CD8-positive, alpha-beta T cell (primary cell): ENCODE measurements at regions of chr1 and their contacts with region 1.

Region 1: DNA sequence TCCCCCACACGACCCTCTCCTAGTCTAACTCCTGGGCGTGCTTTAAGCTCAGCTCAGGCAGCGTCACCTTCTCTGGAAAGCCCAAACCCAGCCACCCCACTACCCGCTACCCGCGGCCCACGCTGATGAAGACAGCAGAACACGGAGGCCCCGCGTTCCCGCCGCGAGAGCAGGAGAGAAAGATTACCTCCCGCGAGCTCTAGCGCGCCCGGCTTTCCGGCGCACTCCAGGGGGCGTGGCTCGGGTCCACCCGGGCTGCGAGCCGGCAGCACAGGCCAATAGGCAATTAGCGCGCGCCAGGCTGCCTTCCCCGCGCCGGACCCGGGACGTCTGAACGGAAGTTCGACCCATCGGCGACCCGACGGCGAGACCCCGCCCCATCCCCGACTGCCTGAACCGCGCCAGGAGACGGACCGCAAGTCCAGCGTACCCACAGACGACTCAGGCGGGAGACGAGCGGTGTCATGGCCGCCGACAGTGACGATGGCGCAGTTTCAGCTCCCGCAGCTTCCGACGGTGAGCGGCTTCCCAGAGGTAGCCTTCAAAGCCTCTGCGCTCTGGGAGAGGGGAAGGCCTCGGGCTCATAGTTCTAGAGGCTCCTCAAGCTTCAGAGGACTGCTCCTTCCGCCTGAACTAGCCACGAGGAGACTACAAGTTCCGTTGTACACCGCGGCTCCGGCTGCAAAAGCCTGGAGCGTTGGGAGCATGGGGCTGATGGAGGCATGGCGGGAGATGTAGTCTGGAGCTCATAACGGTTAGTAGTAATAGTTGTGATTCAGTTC is at the starts of genes MUTYH and TOE1:
- DNase-seq: peak; percentile 79 to 94 (median 89)
- ATAC-seq: peak; percentile 81
- H3K4me3 ChIP-seq: peak within 1 kb of the TSS; percentile 88 to 94
- H3K4me3 Mint-ChIP-seq: peak within 1 kb of the TSS; percentile 98
- H3K27ac ChIP-seq: peak within 1 kb of the TSS; percentile 97 to 99
- H3K27ac Mint-ChIP-seq: peak within 1 kb of the TSS; percentile 97
- H3K4me1 ChIP-seq: peaks cover 35% of the 10 kb centered on the region
- H3K4me1 Mint-ChIP-seq: peaks cover 50% of the 10 kb centered on the region
- H3K27me3 ChIP-seq: no peaks in the 10 kb centered on the region
- H3K27me3 Mint-ChIP-seq: no peaks in the 10 kb centered on the region
- CTCF ChIP-seq: no peak
- total RNA-seq, gene MUTYH: 53.0 to 62.5 TPM
- total RNA-seq, gene TOE1: 53.8 to 56.5 TPM

Region 2: GRCh38 chr1:44739361-44740178 is 600.4 kb before region 1 on chr1 and contains the start of gene KIF2C:
- CTCF ChIA-PET with region 1: no interaction called
- POLR2A ChIA-PET with region 1: no interaction called
- intact Hi-C with region 1: loop called in 1 of 2 experiments (anchors 1 kb)
- DNase-seq: peak; percentile 93 to 98 (median 96)
- ATAC-seq: peak; percentile 100
- H3K4me3 ChIP-seq: peak within 1 kb of the TSS; percentile 81 to 84
- H3K4me3 Mint-ChIP-seq: peak within 1 kb of the TSS; percentile 93
- H3K27ac ChIP-seq: peak within 1 kb of the TSS; percentile 69 to 88
- H3K27ac Mint-ChIP-seq: peak within 1 kb of the TSS; percentile 97
- H3K4me1 ChIP-seq: peaks cover 12% of the 10 kb centered on the region
- H3K4me1 Mint-ChIP-seq: peaks cover 17% of the 10 kb centered on the region
- H3K27me3 ChIP-seq: no peaks in the 10 kb centered on the region
- H3K27me3 Mint-ChIP-seq: no peaks in the 10 kb centered on the region
- CTCF ChIP-seq: no peak
- total RNA-seq, gene KIF2C: 0.58 to 0.81 TPM

Region 3: DNA sequence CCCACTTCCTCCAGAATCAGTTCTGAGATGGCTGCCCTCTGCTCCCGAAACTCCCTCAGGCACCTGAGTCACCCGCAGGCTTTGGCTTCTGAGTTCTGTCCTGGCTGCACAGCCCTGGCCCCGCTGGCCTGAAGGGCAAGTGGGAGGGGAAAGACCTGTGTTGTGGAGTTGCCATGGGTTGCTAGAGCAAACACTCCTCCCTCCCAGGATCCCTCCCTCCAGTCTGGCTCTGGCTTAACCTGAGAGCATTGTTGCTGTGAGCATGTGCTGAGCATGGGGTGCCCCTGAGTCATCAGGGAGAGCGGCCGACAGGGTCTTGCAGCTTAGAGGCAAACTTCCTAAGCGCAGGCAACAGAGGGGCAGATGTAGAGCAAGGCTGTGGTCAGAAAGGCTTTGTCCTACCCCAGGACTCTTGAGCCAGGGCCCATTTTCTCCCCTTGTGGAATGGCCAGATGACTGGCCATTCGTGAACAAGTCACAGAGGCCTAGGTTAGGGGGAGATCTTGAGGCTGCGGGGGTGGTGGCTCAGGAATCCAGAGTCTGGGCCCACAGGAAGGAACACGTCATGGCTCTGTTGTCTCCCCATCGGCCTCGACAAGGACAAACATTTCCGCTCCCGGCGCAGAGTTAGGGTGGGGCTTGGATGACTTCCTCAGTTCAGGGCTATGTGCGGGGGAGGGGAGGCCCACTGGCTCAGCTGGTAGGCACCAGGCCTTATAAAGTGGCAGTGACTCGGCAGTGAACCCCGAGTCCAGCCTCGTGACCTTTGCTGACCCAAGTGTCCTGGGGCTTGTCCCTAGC is 532.5 kb before region 1 on chr1 and contains the start of gene DYNLT4:
- CTCF ChIA-PET with region 1: no interaction called
- POLR2A ChIA-PET with region 1: interaction called, 10 read pairs
- intact Hi-C with region 1: no loop called
- DNase-seq: peak; percentile 83 to 98 (median 93)
- ATAC-seq: peak; percentile 58
- H3K4me3 ChIP-seq: peak within 1 kb of the TSS in 1 of 2 experiments; percentile 35
- H3K4me3 Mint-ChIP-seq: peak within 1 kb of the TSS; percentile 60
- H3K27ac ChIP-seq: peak within 1 kb of the TSS; percentile 93 to 96
- H3K27ac Mint-ChIP-seq: peak within 1 kb of the TSS; percentile 99
- H3K4me1 ChIP-seq: peaks cover 70% of the 10 kb centered on the region
- H3K4me1 Mint-ChIP-seq: peaks cover 78% of the 10 kb centered on the region
- H3K27me3 ChIP-seq: no peaks in the 10 kb centered on the region
- H3K27me3 Mint-ChIP-seq: no peaks in the 10 kb centered on the region
- CTCF ChIP-seq: no peak
- total RNA-seq, gene DYNLT4: 2.2 to 2.5 TPM

Region 4: GRCh38 chr1:45317166-45317565 is 22.8 kb before region 1 on chr1:
- CTCF ChIA-PET with region 1: no interaction called
- POLR2A ChIA-PET with region 1: no interaction called
- intact Hi-C with region 1: no loop called
- DNase-seq: no peak
- ATAC-seq: no peak
- H3K4me3 ChIP-seq: no peak overlapping the region
- H3K4me3 Mint-ChIP-seq: no peak overlapping the region
- H3K27ac ChIP-seq: no peak overlapping the region
- H3K27ac Mint-ChIP-seq: no peak overlapping the region
- H3K4me1 ChIP-seq: no peaks in the 10 kb centered on the region
- H3K4me1 Mint-ChIP-seq: no peaks in the 10 kb centered on the region
- H3K27me3 ChIP-seq: no peaks in the 10 kb centered on the region
- H3K27me3 Mint-ChIP-seq: no peaks in the 10 kb centered on the region
- CTCF ChIP-seq: no peak

Region 5: DNA sequence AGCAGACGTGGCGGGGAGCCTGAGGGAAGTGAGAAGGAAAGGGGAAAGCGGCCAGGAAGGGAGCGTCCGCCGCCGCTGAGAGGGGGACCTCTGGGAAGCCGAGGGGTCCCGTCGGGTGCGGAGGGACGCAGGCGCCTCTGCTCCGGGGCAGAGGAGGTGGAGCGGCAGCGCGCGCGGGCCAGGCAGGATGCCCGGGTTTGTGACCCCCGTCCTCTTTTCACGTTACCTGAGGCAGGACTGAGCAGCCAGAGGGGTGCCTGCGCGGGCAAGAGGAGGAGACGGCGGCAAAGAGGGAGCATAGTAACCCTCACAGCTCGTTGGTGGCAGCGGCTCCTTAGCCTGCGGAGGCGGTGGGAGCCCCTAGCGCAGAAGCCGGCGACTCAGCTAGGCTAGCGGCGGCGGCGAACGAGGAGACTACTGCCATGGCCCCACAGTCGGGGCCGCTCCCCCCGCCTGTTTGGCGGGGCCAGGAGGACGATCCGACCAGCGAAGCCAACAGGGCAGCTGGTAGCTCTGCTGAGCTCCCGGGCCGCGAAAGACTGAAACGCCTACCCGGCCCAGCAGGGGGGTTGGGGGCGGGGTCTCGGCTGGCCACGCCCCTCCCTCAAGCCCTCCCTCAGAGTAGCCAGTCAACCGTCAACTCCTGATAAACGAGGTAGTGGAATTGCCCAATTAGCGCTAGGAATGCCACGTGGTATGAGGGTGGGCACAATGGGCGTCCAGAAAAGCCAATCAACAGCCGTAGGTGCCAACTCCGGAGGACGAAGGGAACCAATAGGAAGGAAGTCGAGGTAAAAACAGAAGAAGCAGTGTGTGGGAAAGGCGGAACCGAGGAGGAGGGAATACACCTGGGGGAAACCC is 150.9 kb after region 1 on chr1 and contains the start of gene TESK2:
- CTCF ChIA-PET with region 1: interaction called, 30 read pairs
- POLR2A ChIA-PET with region 1: interaction called, 33 read pairs
- intact Hi-C with region 1: loop called (anchors 1 to 2 kb)
- DNase-seq: peak; percentile 94 to 100 (median 95)
- ATAC-seq: peak; percentile 91
- H3K4me3 ChIP-seq: peak within 1 kb of the TSS; percentile 74 to 91
- H3K4me3 Mint-ChIP-seq: no peak within 1 kb of the TSS
- H3K27ac ChIP-seq: peak within 1 kb of the TSS; percentile 49 to 72
- H3K27ac Mint-ChIP-seq: no peak within 1 kb of the TSS
- H3K4me1 ChIP-seq: peaks cover 11% of the 10 kb centered on the region
- H3K4me1 Mint-ChIP-seq: peaks cover 16% of the 10 kb centered on the region
- H3K27me3 ChIP-seq: peaks cover 0 to 3% of the 10 kb centered on the region in 2 experiments
- H3K27me3 Mint-ChIP-seq: no peaks in the 10 kb centered on the region
- CTCF ChIP-seq: no peak
- total RNA-seq, gene TESK2: 4.6 to 5.8 TPM

Region 6: GRCh38 chr1:45550401-45551351 is 210.7 kb after region 1 on chr1 and contains the start of gene AKR1A1:
- CTCF ChIA-PET with region 1: no interaction called
- POLR2A ChIA-PET with region 1: no interaction called
- intact Hi-C with region 1: loop called in 1 of 2 experiments (anchors 1 kb)
- DNase-seq: peak; percentile 71 to 93 (median 83)
- ATAC-seq: peak; percentile 94
- H3K4me3 ChIP-seq: peak within 1 kb of the TSS; percentile 85 to 96
- H3K4me3 Mint-ChIP-seq: peak within 1 kb of the TSS; percentile 95
- H3K27ac ChIP-seq: peak within 1 kb of the TSS; percentile 76 to 91
- H3K27ac Mint-ChIP-seq: peak within 1 kb of the TSS; percentile 93
- H3K4me1 ChIP-seq: peaks cover 16% of the 10 kb centered on the region
- H3K4me1 Mint-ChIP-seq: peaks cover 23% of the 10 kb centered on the region
- H3K27me3 ChIP-seq: no peaks in the 10 kb centered on the region
- H3K27me3 Mint-ChIP-seq: no peaks in the 10 kb centered on the region
- CTCF ChIP-seq: no peak
- total RNA-seq, gene AKR1A1: 27.2 to 31.9 TPM